A549 (cell line): ENCODE measurements at regions of chr1 and their contacts with region 1.

Region 1: GRCh38 chr1:75220072-75220471 is 85.9 kb downstream of the LHX8 start:
- DNase-seq: no peak
- ATAC-seq: no peak
- H3K4me3 ChIP-seq: no peak overlapping the region
- H3K27ac ChIP-seq: no peak overlapping the region
- H3K4me1 ChIP-seq: no peaks in the 10 kb centered on the region
- CTCF ChIP-seq: no peak
- EP300 ChIP-seq: no peak
- POLR2A ChIP-seq: no peak
- RAD21 ChIP-seq: no peak

Region 2: DNA sequence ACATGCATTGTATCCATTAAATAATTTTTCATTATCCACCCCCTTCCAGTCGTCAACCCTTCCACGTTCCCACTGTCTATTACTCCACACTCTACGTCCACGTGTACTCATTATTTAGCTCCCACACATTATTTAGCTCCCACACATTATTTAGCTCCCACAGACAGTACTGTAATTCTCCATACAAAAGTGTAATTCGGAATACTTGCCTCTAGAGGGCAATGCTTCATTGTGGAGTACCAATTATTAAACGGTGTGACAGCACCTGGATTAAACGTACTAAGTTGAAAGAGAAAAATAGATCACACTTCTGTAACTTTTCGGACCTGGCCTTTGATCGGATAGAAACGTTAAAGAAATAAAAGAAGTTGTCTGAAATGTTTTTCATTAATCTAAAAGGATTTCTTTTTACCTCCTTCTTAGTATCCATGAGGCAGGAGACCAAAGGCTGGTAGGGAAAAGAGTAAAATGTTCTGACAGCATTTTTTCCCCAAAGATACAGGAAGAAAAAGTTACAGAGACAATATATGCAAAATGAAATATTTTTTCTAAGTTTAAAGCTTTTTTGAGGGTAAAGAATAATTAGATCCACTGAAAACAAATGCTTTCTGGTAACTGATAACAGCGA is 13.3 kb after region 1 on chr1:
- CTCF ChIA-PET with region 1: interaction called, 10 read pairs
- POLR2A ChIA-PET with region 1: no interaction called
- DNase-seq: peak; percentile 2 to 23
- ATAC-seq: peak; percentile 74 to 85; a peak in 5 of 6 replicates
- H3K4me3 ChIP-seq: no peak overlapping the region
- H3K27ac ChIP-seq: no peak overlapping the region
- H3K4me1 ChIP-seq: no peaks in the 10 kb centered on the region
- CTCF ChIP-seq: peak; percentile 58
- EP300 ChIP-seq: no peak
- POLR2A ChIP-seq: no peak
- RAD21 ChIP-seq: peak; percentile 43 to 45; a peak in 3 of 5 replicates